ENCODE measurements at regions of chr16 and their contacts with region 1.

Region 1: DNA sequence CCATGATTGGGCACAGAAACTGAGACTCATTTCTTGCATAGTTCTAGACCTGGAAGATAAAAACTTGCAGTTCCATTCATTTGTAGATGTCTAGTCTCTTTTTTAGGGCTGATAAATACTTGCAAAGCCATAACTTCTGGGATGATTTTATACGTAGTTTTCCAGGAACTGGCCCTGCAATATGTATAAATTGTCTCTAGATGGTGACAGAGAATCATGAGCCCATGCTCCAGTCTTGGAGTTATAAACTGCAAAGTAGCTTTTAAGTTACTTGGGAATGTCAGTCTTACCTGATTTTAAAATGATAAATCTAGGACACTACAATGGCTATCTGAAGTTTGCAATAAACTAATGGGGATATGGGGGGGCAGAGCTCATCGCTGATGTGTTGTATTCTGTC is 3.0 kb upstream of the ADAMTS18 start:
- DNase-seq: no peak
- ATAC-seq: no peak
- H3K4me3 Mint-ChIP-seq: no peak overlapping the region
- H3K27ac Mint-ChIP-seq: no peak overlapping the region
- H3K4me1 Mint-ChIP-seq: peaks cover 31% of the 10 kb centered on the region
- H3K27me3 Mint-ChIP-seq: peaks cover 43% of the 10 kb centered on the region
- CTCF ChIP-seq: no peak

Region 2: DNA sequence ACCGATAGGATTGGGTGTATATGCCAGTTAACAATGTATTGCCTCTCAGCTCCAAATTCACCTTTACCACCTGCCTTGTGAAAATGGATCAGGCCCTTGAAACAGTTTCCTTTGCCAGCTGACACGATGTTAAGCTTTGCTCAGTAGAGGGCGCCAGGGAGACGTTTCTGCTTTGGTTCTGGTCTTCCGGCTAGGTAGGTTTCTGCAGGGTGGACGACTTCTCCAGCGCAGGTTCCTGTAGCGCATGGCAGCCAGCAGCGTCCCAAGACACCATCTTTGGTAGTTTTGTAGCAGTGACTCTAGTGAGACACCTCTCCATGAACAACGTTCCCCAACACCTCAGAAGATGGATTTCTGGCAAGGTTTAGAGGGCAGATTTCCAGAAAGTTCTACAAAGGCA is 214.7 kb before region 1 on chr16:
- CTCF ChIA-PET with region 1: interaction called, 10 read pairs
- POLR2A ChIA-PET with region 1: no interaction called
- DNase-seq: peak; percentile 65
- ATAC-seq: peak; percentile 91
- H3K4me3 Mint-ChIP-seq: no peak overlapping the region
- H3K27ac Mint-ChIP-seq: no peak overlapping the region
- H3K4me1 Mint-ChIP-seq: peaks cover 23% of the 10 kb centered on the region
- H3K27me3 Mint-ChIP-seq: no peaks in the 10 kb centered on the region
- CTCF ChIP-seq: peak; percentile 42; the same call in 1 of the 2 replicates

Region 3: DNA sequence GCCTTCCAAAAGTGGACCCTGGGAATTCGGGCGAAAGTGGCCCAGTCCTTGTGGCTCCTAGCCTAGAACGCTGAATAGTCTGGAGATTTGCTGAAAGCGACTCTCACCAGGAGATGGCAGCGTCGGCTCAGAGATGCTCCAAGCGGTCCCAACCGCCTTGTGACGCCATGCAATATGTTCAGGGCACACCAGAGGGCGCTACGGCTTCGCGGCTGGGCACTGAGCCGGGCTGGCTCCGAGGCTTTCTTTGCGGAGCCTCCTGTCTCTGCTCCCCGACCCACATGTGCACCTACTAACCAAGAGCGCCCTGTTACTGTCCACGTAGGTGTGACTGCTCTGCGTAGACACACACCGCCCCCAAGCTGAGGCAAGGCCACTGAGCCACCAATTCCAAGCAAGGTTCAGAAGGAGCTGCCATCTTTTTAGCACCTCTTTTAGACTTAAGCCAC is 201.8 kb before region 1 on chr16:
- CTCF ChIA-PET with region 1: interaction called, 11 read pairs
- POLR2A ChIA-PET with region 1: no interaction called
- DNase-seq: peak; percentile 94
- ATAC-seq: peak; percentile 89
- H3K4me3 Mint-ChIP-seq: no peak overlapping the region
- H3K27ac Mint-ChIP-seq: no peak overlapping the region
- H3K4me1 Mint-ChIP-seq: peaks cover 46% of the 10 kb centered on the region
- H3K27me3 Mint-ChIP-seq: peaks cover 5% of the 10 kb centered on the region
- CTCF ChIP-seq: peak; percentile 96

Region 4: DNA sequence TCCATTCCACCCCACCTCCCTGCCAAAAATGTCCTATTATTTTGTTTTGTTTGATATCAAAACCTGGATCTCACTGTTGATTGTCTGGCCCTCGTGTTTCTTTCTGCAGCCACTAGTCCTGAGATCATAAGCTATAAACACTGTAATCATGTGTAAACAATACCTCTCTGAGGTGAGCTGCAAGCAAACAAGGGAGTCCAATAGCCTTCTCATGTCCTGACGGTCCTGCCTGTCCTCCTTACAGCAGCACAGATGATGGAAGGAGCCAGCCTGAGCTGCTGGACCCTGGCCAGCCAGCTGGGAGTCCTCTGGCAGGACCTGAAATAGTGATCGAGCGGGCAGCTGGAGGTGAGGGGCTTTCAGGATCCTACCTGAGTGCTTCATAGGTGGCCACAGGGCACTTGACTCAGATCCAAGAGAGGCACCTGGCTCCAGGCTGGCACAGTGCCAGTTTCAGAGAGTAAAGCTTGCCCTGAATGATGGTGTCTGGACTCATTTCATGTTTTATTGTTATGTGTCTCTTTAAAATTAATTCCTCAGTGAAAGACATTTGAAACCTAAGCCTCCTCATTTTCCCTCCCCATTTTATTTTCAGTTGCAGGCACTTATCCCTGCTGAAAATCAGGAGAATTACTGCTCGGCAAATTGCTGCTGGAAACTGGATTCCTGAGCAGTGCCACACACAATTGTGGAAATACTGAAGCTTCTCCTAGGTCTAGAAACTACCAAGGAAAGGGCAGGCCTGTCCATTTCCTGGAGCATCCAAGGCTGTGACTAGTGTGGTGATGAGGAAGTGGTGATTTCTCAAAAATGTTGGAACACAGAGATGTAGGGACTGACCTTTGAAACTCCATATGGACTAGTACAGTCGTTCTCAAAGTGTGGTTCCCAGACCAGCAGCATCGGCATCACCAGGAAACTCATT is 13.0 kb after region 1 on chr16:
- CTCF ChIA-PET with region 1: no interaction called
- POLR2A ChIA-PET with region 1: no interaction called
- DNase-seq: no peak
- ATAC-seq: no peak
- H3K4me3 Mint-ChIP-seq: no peak overlapping the region
- H3K27ac Mint-ChIP-seq: no peak overlapping the region
- H3K4me1 Mint-ChIP-seq: peaks cover 8% of the 10 kb centered on the region
- H3K27me3 Mint-ChIP-seq: no peaks in the 10 kb centered on the region
- CTCF ChIP-seq: no peak

Region 5: DNA sequence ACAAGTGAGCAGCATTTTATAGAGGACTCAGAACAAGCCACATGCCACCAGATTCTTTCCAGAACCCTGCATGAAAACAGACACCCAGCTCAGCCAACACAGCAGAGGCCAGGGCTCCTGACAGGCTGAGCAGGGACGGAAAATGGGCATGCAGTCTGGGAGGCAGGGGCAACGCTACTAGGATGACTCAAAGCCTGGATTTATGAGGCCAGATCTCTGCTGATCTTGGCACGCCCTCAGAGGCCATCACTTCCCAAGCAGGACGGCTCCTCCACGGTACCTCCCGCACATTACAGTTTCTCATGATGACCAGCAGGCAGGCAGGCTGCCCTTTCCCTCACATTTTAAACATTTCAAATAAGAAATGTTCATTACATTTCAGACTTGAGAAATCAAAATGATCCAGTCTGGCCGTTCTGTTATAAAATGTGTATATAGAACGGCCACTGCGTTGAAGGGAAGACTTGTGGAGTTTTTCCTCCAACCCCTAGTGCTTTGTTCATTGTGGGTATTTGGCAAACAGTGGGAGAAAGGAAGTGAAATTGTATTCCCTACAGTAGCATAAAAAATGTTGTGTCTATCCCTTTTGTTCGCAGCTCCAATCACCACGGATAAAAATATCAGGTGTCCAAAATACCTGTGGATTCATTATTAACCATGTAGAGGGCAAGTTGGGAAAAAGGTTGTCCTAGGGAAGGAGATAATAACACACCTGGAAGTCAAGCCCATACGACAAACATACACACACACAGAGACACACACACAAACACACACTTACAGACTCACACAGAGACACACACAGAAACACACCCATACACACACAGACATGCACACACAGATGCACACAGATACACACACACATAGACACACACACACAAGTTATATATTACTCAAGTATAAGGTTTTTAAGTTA is 61.8 kb after region 1 on chr16:
- CTCF ChIA-PET with region 1: no interaction called
- POLR2A ChIA-PET with region 1: interaction called, 10 read pairs
- DNase-seq: peak; percentile 8
- ATAC-seq: no peak
- H3K4me3 Mint-ChIP-seq: no peak overlapping the region
- H3K27ac Mint-ChIP-seq: no peak overlapping the region
- H3K4me1 Mint-ChIP-seq: peaks cover 40% of the 10 kb centered on the region
- H3K27me3 Mint-ChIP-seq: peaks cover 14% of the 10 kb centered on the region
- CTCF ChIP-seq: no peak

Region 6: DNA sequence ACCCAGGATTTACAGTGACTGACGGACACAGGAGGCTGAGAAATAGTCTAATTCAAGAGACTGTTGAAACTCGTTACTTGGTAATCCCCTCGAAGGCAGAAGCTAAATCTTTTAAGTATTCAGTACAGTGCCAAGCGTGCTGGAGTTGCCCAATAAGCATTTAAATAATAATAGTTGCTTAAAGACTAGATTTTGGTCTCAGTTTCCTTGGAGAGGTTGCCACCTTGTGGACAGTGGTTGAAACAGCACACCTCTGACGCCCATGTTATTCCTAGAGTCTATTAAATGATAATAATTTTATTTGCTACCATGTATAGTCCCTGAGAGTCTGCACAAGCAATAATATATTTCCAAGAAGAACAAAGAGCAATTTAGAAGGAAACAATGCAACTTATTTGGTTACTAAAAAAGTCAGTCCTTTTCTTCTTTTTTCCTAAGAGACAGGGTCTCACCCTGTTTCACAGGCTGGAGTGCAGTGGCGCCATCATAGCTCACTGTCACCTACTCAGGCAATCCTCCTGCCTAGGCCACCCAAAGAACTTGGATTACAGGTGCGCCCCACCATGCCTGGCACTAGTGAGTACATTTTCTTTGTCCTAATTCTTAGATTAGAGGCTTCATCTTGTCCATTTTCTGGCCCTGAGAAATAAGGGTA is 146.5 kb after region 1 on chr16:
- CTCF ChIA-PET with region 1: interaction called, 60 read pairs
- POLR2A ChIA-PET with region 1: no interaction called
- DNase-seq: peak; percentile 53
- ATAC-seq: peak; percentile 74
- H3K4me3 Mint-ChIP-seq: no peak overlapping the region
- H3K27ac Mint-ChIP-seq: no peak overlapping the region
- H3K4me1 Mint-ChIP-seq: peaks cover 19% of the 10 kb centered on the region
- H3K27me3 Mint-ChIP-seq: no peaks in the 10 kb centered on the region; the same call in 1 of the 2 replicates
- CTCF ChIP-seq: peak; percentile 79

Measured in WTC11 (cell line).